SK-N-SH (cell line): ENCODE measurements at regions of chr15 and their contacts with region 1.

Region 1: DNA sequence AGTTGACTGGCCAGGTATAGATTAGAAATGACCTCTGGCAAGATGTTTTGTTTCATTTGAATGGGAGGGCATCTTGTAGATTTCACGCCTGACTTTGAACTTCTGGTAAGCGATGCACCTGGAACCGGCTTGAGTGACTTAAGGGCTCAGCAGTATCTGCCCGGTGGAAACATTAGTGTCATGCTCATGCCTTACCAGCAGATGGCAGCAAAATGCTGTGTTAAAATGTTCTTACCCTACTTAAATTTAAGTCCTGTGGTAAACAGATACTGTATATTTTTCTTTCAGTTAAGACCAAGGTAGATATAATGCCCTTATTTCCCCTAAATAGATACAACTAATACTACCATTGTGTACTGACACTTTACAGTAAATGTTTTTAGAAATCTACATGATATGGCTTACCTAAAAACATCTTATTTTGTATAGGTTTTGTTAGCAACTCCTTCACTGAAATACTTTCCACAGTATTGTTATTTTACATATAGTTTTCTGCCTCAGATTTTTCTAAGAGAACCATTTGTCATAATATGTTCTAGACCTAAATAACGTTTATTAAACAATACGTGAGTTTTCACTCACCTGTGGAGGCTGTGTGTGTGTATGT is 25.5 kb downstream of the ASB7 start:
- DNase-seq: peak; percentile 75
- H3K4me3 ChIP-seq: no peak overlapping the region
- H3K27ac ChIP-seq: no peak overlapping the region
- H3K4me1 ChIP-seq: peaks cover 0 to 7% of the 10 kb centered on the region in 2 experiments; a peak in 1 of 4 replicates
- H3K27me3 ChIP-seq: no peaks in the 10 kb centered on the region
- CTCF ChIP-seq: peak; percentile 83
- EP300 ChIP-seq: no peak
- RAD21 ChIP-seq: peak; percentile 94

Region 2: GRCh38 chr15:100484443-100484842 is 143.4 kb before region 1 on chr15:
- CTCF ChIA-PET with region 1: no interaction called
- POLR2A ChIA-PET with region 1: no interaction called
- DNase-seq: no peak
- H3K4me3 ChIP-seq: no peak overlapping the region
- H3K27ac ChIP-seq: no peak overlapping the region
- H3K4me1 ChIP-seq: no peaks in the 10 kb centered on the region
- H3K27me3 ChIP-seq: no peaks in the 10 kb centered on the region
- CTCF ChIP-seq: no peak
- EP300 ChIP-seq: no peak
- RAD21 ChIP-seq: no peak

Region 3: DNA sequence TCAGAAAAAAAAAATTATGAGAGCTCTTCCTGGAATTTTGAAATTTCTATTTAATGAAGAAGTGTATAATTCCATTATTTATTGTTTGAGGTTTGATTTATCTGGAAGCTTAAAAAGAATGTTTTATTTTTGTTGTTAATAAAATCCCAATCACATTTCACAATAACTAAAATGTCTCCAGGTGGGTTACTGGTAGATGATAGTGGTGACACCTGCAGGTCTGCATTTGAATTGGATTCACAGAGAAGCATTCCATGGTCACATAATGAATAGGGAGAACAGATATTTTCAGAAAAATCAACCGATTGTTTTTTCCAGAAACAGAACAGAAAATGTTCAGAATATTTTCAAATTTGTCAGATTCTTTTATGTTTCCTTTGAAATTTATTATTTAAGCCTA is 22.8 kb after region 1 on chr15:
- CTCF ChIA-PET with region 1: interaction called, 12 read pairs
- POLR2A ChIA-PET with region 1: interaction called, 3 read pairs
- DNase-seq: no peak
- H3K4me3 ChIP-seq: no peak overlapping the region
- H3K27ac ChIP-seq: no peak overlapping the region
- H3K4me1 ChIP-seq: no peaks in the 10 kb centered on the region
- H3K27me3 ChIP-seq: no peaks in the 10 kb centered on the region
- CTCF ChIP-seq: peak; percentile 27
- EP300 ChIP-seq: no peak
- RAD21 ChIP-seq: peak; percentile 17; the same call in 1 of the 2 replicates

Region 4: DNA sequence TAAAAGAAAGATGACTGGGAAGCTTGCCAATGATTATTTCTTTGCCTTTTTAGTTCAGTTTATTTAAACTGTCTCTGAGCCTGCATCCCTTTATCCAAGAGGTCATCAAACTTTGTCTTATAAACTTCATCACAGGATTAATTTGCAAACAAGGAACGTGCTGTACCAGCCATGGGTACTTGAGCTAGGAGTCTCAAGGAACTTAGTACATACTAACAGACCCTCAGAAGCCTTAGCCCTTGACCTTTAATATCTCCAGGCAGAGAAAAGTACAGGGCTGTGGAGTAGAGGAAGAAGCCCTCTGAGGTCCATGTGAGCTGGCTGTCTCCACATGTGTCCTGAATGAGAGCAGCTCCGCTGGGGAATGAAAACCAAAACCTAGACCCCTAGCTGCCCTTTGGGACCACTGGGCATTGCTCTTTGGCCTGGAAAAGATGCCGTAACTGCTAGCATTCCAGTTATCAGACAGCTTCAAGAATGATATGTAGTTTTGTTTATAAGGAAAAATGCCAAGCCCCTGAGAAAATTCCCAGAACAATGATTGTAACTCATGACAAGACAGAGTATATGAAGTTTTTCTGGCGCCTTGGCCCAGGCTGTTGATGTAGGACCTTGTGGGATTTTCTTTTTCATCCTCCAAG is 66.6 kb after region 1 on chr15:
- CTCF ChIA-PET with region 1: no interaction called
- POLR2A ChIA-PET with region 1: no interaction called
- DNase-seq: no peak
- H3K4me3 ChIP-seq: no peak overlapping the region
- H3K27ac ChIP-seq: no peak overlapping the region
- H3K4me1 ChIP-seq: no peaks in the 10 kb centered on the region
- H3K27me3 ChIP-seq: no peaks in the 10 kb centered on the region
- CTCF ChIP-seq: no peak
- EP300 ChIP-seq: no peak
- RAD21 ChIP-seq: no peak